B cell (primary cell): ENCODE measurements at regions of chr19 and their contacts with region 1.

Region 1: DNA sequence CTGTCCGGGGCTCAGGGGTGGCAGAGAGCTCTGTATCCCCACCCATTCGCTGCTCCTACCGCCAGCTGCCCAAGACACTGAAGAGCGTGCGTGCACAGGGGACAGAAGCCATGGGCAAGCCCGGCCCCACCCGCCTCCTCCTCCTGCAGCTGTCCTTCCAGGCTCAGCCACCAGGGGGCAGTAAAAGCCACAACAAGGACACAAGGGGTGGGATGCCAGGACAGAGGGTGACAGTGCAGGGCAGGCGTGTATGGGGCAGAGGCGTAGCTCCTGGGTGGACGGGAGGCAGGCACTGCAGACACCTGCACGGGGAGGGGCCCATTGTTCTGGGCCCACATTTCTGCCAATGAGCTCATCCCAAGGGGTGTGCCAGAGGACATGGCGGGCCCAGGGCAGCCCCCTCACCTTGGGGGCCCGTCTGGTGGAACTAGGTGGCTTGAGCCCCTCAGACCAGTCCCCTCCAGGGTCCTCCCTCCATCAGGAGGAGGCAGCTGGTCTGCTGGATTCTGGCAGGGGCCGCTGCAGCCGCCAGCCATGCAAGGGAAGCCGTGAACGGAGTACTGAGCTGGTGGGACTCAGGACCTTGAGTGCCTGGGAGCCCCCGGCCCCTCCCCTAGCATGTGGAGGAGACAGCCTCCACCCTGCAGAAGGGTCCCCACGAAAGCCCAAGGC is 61.1 kb downstream of the MLLT1 start:
- DNase-seq: peak; percentile 82
- ATAC-seq: peak; percentile 79
- H3K4me3 ChIP-seq: no peak overlapping the region
- H3K4me3 Mint-ChIP-seq: no peak overlapping the region
- H3K27ac ChIP-seq: no peak overlapping the region
- H3K27ac Mint-ChIP-seq: no peak overlapping the region
- H3K4me1 ChIP-seq: peaks cover 0 to 6% of the 10 kb centered on the region in 2 donors
- H3K4me1 Mint-ChIP-seq: peaks cover 3% of the 10 kb centered on the region
- H3K27me3 ChIP-seq: no peaks in the 10 kb centered on the region
- H3K27me3 Mint-ChIP-seq: no peaks in the 10 kb centered on the region
- CTCF ChIP-seq: peak; percentile 92

Region 2: DNA sequence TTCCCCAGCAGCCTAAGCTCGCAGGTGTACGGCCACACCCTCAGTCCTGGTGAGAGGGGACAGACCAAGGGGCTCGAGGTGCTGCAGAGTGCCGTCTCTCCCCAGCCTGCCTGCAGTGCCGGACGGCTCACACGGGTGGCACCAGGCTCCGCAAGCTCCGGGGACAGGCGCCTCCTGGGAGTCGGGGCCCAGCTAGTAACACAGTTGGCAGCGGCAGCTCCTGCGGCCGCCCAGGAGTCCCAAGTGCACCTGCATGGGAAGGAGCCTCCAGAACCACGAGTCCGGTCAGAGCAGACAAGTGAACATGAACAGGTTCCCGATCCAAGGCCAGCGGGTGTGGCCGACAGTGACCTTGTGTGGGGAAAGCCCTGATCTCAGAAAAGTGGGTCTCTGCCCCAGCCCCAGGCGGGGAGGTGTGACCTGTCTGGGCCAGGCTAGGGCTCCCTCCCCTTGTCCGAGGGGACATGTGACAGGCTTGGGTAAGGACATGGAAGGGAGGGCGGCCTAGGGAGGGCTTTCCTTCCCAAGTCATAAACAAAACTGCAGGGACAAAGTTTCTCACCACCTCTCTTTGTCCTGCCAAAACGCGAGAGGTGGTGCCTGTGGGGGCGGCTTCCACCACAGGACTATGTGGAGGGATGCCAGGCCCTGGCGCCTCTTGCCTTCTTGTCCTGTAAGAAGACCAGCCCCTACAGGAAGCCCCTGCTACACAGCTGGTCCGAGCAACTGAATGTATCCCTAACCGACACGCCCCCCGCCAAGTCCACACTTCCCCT is 14.6 kb after region 1 on chr19:
- CTCF ChIA-PET with region 1: no interaction called
- POLR2A ChIA-PET with region 1: no interaction called
- intact Hi-C with region 1: no loop called
- DNase-seq: no peak
- ATAC-seq: no peak
- H3K4me3 ChIP-seq: no peak overlapping the region
- H3K4me3 Mint-ChIP-seq: no peak overlapping the region
- H3K27ac ChIP-seq: no peak overlapping the region
- H3K27ac Mint-ChIP-seq: no peak overlapping the region
- H3K4me1 ChIP-seq: peaks cover 4 to 12% of the 10 kb centered on the region in 2 donors
- H3K4me1 Mint-ChIP-seq: peaks cover 29% of the 10 kb centered on the region
- H3K27me3 ChIP-seq: no peaks in the 10 kb centered on the region
- H3K27me3 Mint-ChIP-seq: no peaks in the 10 kb centered on the region
- CTCF ChIP-seq: no peak

Region 3: GRCh38 chr19:6297202-6297601 is 78.6 kb after region 1 on chr19:
- CTCF ChIA-PET with region 1: interaction called, 12 read pairs
- POLR2A ChIA-PET with region 1: no interaction called
- intact Hi-C with region 1: no loop called
- DNase-seq: no peak
- ATAC-seq: no peak
- H3K4me3 ChIP-seq: no peak overlapping the region
- H3K4me3 Mint-ChIP-seq: no peak overlapping the region
- H3K27ac ChIP-seq: no peak overlapping the region
- H3K27ac Mint-ChIP-seq: no peak overlapping the region
- H3K4me1 ChIP-seq: no peaks in the 10 kb centered on the region
- H3K4me1 Mint-ChIP-seq: no peaks in the 10 kb centered on the region
- H3K27me3 ChIP-seq: peaks cover 0 to 17% (median 0%) of the 10 kb centered on the region in 4 experiments
- H3K27me3 Mint-ChIP-seq: peaks cover 3% of the 10 kb centered on the region
- CTCF ChIP-seq: no peak

Region 4: GRCh38 chr19:6501740-6502648 is 283.4 kb after region 1 on chr19 and contains the start of gene TUBB4A:
- CTCF ChIA-PET with region 1: interaction called, 4 read pairs
- POLR2A ChIA-PET with region 1: no interaction called
- intact Hi-C with region 1: loop called (anchors 2 kb)
- DNase-seq: peak; percentile 68
- ATAC-seq: peak; percentile 83
- H3K4me3 ChIP-seq: peak within 1 kb of the TSS in 4 of 5 experiments; percentile 47 to 67 (median 59)
- H3K4me3 Mint-ChIP-seq: peak within 1 kb of the TSS; percentile 92
- H3K27ac ChIP-seq: no peak within 1 kb of the TSS
- H3K27ac Mint-ChIP-seq: peak within 1 kb of the TSS; percentile 78
- H3K4me1 ChIP-seq: peaks cover 16 to 21% of the 10 kb centered on the region in 2 donors
- H3K4me1 Mint-ChIP-seq: peaks cover 18% of the 10 kb centered on the region
- H3K27me3 ChIP-seq: peaks cover 0 to 17% (median 3%) of the 10 kb centered on the region in 4 experiments
- H3K27me3 Mint-ChIP-seq: peaks cover 3% of the 10 kb centered on the region
- CTCF ChIP-seq: peak; percentile 13
- total RNA-seq, gene TUBB4A: 21.9 and 22.1 TPM in 2 replicates